Activated CD4-positive, alpha-beta memory T cell treated with anti-CD3 and anti-CD28 coated beads for 36 hours (primary cell): ENCODE measurements at regions of chr18 and their contacts with region 1.

Region 1: DNA sequence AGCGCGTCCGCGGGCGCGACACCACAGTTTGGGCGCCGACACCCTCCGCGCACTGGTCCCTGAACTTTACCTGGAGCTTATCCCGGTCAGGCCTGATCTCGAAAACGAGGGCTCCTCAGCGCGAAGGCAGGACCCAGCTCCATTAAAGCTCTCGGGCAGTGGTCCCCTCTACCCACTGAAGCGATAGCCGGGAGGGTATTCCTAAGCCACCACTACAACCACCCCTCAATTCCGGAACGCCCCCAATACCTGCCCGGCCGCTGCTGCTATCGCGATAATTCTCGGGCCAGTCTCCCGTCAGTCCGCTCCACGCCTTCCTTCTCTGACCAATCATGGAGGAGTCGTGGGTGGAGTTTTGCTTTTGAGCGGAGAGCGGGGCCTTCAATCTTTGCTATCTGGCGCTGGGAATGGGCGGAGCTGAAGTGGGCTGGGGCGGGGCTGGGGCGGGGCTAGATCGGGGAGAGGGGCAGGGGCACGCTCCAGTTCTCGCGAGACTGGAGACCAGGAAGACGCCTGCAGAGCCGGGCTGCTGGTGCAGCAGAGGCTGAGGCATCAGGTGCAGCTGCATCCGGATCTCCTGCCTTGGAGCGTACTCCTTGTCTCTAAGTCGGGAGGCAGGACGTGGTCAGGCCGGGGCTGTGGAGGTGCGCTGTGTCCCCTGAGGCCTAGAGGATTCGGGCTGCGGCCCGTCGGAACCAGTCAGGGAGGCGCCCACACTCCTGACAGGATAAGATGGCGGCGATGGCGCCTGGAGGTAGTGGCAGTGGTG is at the starts of genes PIGN and RELCH:
- DNase-seq: peak; percentile 97
- H3K4me3 Mint-ChIP-seq: peak within 1 kb of the TSS; percentile 99
- H3K27ac Mint-ChIP-seq: peak within 1 kb of the TSS; percentile 93
- H3K4me1 Mint-ChIP-seq: peaks cover 51% of the 10 kb centered on the region
- H3K27me3 Mint-ChIP-seq: no peaks in the 10 kb centered on the region
- total RNA-seq, gene PIGN: 26.2 to 27.8 TPM
- total RNA-seq, gene RELCH: 16.1 to 17.7 TPM

Region 2: GRCh38 chr18:61619783-61620182 is 567.2 kb before region 1 on chr18:
- CTCF ChIA-PET with region 1: no interaction called
- POLR2A ChIA-PET with region 1: no interaction called
- intact Hi-C with region 1: no loop called
- DNase-seq: no peak
- H3K4me3 Mint-ChIP-seq: no peak overlapping the region
- H3K27ac Mint-ChIP-seq: no peak overlapping the region
- H3K4me1 Mint-ChIP-seq: no peaks in the 10 kb centered on the region
- H3K27me3 Mint-ChIP-seq: peaks cover 2% of the 10 kb centered on the region

Region 3: DNA sequence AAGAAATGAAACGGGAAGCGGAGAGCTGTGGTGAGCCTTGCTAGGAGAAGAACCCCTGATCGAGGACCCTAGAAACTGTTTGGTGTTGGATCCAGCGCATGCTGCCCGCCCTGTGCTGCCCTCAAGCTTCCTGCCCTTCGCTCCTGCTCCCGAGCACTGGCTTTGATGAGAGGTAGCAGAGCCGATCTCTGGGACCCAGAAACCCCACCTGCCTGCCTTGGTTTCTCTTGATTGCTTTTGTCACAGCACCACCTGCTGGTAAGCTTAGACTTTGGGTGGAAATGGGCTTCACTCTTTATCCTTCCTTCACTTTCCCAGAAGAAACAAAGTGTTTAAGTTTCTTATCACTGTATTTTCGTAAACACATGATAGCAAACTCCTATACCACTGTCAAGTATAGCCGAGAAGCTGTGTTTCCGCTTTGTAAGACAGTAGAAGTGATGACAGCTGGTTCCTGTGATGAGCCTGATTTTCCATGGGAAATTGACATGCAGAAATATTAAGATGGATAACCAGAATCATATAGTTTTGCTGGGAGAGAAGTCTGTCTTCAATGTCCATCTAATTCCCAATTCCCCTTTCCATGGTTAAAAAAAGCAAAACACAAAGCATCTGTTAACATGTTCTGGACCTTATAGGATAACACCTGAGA is 795.8 kb after region 1 on chr18:
- CTCF ChIA-PET with region 1: no interaction called
- POLR2A ChIA-PET with region 1: no interaction called
- intact Hi-C with region 1: loop called (anchors 10 kb)
- DNase-seq: peak; percentile 66
- H3K4me3 Mint-ChIP-seq: no peak overlapping the region
- H3K27ac Mint-ChIP-seq: no peak overlapping the region
- H3K4me1 Mint-ChIP-seq: no peaks in the 10 kb centered on the region
- H3K27me3 Mint-ChIP-seq: no peaks in the 10 kb centered on the region